ENCODE measurements at regions of chr17 and their contacts with region 1.

Region 1: DNA sequence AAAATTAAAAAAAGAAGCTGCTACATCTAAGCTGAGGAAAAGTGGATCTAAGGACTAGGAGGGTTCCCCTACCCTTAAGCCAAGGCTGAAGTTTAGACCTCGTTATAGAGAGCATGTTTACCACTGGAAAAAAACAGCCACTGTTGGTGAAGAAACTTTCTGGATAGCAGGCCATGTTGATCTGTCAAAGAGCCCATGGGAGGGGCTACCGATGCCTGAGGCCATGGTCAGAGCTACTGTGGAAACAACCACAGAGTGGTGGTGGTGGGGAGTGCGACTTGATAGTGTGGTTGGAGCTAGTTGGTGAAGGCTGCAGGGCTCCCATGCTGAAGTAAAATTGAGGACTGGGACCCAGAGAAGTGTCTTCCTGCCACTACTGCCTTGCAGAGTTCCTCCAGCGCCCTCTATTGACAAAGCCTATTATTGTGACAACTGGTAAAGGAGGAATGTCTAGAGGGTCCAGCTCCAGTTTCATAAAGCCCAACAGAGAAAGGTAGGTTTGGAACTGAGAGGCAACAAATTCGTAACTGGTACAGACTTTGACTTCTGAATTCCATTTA is 12.7 kb upstream of the FAM20A start:
- DNase-seq: no peak

Region 2: DNA sequence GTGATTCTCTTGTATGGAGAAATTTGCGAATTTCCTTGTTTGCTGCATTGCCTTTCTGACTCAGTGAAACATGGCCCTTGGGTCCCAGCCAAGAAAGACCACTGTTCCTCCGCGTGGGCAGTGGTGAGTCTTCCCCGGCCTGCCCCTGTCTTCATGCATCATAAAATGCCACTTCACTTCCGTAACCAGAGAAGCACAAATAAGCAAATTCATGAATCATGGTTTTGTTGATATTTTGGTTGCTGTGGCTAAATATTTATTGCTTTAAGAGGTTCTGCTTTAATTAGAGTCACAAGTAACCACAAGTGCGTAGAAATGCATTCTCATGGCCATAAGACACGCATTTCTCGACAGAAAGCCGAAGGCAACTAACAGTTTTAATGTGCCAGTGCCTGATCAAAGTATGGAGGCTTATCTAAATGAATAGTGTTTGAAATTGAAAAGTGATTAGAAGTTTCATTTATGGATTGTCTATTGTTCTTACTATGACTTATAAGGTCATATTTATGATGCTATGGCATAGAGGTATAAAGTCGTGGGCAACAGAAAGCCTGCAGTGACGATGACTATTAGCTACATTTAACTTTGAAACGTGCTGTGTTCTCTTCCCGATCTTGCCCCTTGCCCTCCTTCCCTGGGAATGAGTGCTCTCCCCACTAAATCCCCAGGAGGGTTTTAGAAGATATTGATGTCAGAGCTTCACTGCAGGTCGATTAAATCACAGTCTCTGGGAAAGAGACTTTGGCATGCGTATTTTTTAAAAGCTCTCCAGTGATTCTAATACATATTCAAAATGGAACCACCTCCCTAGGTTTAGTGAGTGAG is 232.5 kb before region 1 on chr17:
- intact Hi-C with region 1: loop called (anchors 10 kb)
- DNase-seq: no peak

Region 3: DNA sequence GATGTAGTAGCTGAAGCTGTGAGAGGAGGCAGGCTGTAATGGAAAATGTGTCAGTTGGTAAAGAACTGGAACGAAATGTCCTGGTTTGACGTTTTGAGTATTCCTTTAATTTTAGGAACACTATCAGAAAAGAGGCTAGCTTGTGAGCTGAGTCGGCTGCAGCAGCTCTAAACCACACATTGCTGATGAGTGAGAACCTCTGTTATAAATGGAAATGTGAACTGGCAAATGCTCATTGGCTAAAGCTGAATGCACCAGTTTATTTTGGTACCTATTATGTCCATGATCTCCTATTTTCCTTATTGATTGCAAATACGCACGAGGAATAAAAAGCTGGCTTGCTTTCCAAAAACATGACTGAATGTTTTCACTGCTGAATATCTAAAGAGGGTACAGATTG is 145.5 kb before region 1 on chr17:
- intact Hi-C with region 1: loop called (anchors 5 kb)
- DNase-seq: no peak

Region 4: DNA sequence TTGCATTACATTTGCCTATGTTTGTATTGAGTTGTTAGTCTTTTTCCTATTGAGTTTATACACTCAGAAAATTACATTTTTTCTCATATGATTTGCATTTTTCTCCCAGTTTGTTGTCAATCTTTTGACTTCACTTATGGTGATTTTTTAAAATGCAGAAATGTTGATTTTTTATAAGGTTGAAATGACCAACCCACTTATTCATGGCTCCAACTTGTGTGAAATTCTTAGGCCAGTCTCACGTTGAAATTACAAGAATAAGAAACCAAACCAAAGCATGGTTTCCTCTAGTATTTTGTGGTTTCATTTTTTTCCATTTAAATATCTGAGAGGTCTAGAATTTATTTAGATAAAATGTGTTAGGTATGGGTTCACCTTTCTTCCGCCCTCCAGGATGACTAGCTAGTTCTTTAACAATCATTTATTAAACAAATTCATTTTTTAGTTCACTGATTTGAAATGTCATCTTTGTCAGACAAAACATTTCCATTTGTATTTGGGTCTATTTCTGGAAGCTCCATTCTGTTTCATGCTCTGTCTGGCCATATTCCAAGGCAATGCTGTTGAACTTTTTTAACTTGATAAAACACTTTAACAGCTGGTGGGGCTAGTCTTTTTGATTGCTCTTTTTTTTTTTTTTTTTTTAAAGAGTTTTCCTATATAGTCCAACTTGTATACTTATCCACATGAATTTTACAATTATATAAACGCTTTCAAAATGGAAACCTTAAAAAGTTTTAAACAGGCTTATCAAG is 52.7 kb before region 1 on chr17:
- intact Hi-C with region 1: loop called (anchors 5 kb)
- DNase-seq: no peak

Region 5: GRCh38 chr17:68640242-68640989 is 26.6 kb after region 1 on chr17:
- intact Hi-C with region 1: no loop called
- DNase-seq: no peak